B cell (primary cell): ENCODE measurements at regions of chr19 and their contacts with region 1.

Region 1: GRCh38 chr19:3557461-3558248 is at the start of gene MFSD12:
- DNase-seq: peak; percentile 95
- ATAC-seq: peak; percentile 88
- H3K4me3 ChIP-seq: peak within 1 kb of the TSS; percentile 36 to 87 (median 72)
- H3K4me3 Mint-ChIP-seq: peak within 1 kb of the TSS; percentile 99
- H3K27ac ChIP-seq: peak within 1 kb of the TSS; percentile 48 to 87
- H3K27ac Mint-ChIP-seq: peak within 1 kb of the TSS; percentile 94
- H3K4me1 ChIP-seq: peaks cover 42 to 60% of the 10 kb centered on the region in 2 donors
- H3K4me1 Mint-ChIP-seq: peaks cover 43% of the 10 kb centered on the region
- H3K27me3 ChIP-seq: no peaks in the 10 kb centered on the region
- H3K27me3 Mint-ChIP-seq: no peaks in the 10 kb centered on the region
- CTCF ChIP-seq: no peak
- total RNA-seq, gene MFSD12: 99.6 and 100 TPM in 2 replicates

Region 2: GRCh38 chr19:3516675-3517207 is 40.9 kb before region 1 on chr19:
- CTCF ChIA-PET with region 1: no interaction called
- POLR2A ChIA-PET with region 1: no interaction called
- intact Hi-C with region 1: loop called (anchors 5 kb)
- DNase-seq: peak; percentile 78
- ATAC-seq: peak; percentile 85
- H3K4me3 ChIP-seq: no peak overlapping the region
- H3K4me3 Mint-ChIP-seq: peak overlapping the region; percentile 2
- H3K27ac ChIP-seq: peak overlapping the region; percentile 58 to 72
- H3K27ac Mint-ChIP-seq: peak overlapping the region; percentile 83
- H3K4me1 ChIP-seq: peaks cover 10 to 31% of the 10 kb centered on the region in 2 donors
- H3K4me1 Mint-ChIP-seq: peaks cover 50% of the 10 kb centered on the region
- H3K27me3 ChIP-seq: no peaks in the 10 kb centered on the region
- H3K27me3 Mint-ChIP-seq: no peaks in the 10 kb centered on the region
- CTCF ChIP-seq: no peak

Region 3: DNA sequence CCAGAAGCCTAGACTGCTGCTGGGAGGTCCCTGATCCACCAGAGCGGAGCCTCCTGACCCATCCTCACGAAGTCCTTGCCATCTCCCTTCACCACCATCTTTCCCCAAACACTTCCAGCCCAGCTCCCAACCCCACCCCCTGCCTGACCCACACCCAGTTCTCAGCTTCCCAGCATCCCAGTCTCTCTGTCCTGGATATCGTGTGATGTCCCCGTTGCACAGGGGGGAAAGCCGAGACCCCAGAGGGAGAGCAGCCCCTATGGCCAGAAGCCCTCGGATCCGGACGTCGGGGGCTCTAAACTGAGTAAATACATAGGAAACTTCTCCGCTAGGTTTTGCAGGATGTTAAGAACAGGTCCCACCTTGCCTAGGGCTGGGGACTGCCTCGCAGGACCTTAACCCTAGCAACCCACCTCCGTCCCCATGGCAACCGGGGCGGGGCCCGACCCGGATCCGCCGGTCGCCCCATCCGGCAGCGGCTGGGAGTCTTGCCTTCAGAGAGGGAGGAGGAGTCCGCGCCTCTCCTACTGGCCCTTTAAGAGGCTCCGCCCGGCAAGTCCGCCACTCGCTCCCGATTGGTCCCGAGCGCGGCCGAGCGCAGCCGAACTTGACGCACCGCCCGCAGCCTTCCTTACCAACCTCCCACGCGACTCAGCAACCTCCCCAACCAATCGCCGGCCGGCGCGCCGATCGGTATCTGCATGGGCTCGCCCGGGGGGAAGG is 14.6 kb after region 1 on chr19:
- CTCF ChIA-PET with region 1: interaction called, 5 read pairs
- POLR2A ChIA-PET with region 1: interaction called, 4 read pairs
- intact Hi-C with region 1: loop called (anchors 1 kb)
- DNase-seq: peak; percentile 99
- ATAC-seq: peak; percentile 94
- H3K4me3 ChIP-seq: peak overlapping the region; percentile 11 to 74 (median 54)
- H3K4me3 Mint-ChIP-seq: peak overlapping the region; percentile 86
- H3K27ac ChIP-seq: peak overlapping the region; percentile 24 to 65
- H3K27ac Mint-ChIP-seq: peak overlapping the region; percentile 83
- H3K4me1 ChIP-seq: peaks cover 12 to 18% of the 10 kb centered on the region in 2 donors
- H3K4me1 Mint-ChIP-seq: peaks cover 16% of the 10 kb centered on the region
- H3K27me3 ChIP-seq: no peaks in the 10 kb centered on the region
- H3K27me3 Mint-ChIP-seq: no peaks in the 10 kb centered on the region
- CTCF ChIP-seq: no peak

Region 4: DNA sequence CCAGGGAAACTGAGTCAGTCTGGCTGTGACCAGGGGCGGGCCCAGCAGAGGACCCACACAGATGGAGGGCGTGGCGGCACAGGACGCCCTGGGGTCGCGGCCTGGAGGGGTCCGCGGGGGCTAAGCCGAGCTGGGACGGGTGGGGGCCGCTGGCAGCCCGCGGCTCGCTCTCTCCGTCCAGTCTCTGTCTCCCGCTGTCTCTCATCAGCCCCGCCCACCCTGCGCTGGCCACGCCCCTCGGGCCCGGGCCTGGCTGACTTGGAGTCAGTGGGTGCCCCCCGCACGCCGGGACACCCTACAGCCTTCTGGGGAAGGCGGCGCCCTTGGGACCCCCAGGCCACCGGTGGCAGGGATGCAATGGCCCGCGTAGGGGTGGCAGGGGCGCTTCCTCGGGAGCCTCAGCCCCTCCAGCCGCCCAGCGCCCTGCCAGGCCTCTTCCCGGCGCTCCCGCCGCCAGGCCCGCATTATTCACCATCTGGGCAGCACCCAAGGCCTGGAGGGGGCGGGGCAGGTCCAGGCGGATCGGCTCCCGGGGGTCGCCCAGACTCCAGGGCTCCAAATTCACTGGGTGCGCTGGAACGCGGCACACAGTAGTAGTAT is 49.1 kb after region 1 on chr19 and contains the start of gene TBXA2R:
- CTCF ChIA-PET with region 1: interaction called, 6 read pairs
- POLR2A ChIA-PET with region 1: no interaction called
- intact Hi-C with region 1: loop called (anchors 5 kb)
- DNase-seq: peak; percentile 68
- ATAC-seq: peak; percentile 63
- H3K4me3 ChIP-seq: peak within 1 kb of the TSS; percentile 49 to 71 (median 65)
- H3K4me3 Mint-ChIP-seq: peak within 1 kb of the TSS; percentile 69
- H3K27ac ChIP-seq: peak within 1 kb of the TSS in 1 of 2 donors; percentile 55
- H3K27ac Mint-ChIP-seq: peak within 1 kb of the TSS; percentile 22
- H3K4me1 ChIP-seq: peaks cover 36 to 49% of the 10 kb centered on the region in 2 donors
- H3K4me1 Mint-ChIP-seq: peaks cover 21% of the 10 kb centered on the region
- H3K27me3 ChIP-seq: peaks cover 0 to 4% (median 0%) of the 10 kb centered on the region in 4 experiments
- H3K27me3 Mint-ChIP-seq: no peaks in the 10 kb centered on the region
- CTCF ChIP-seq: no peak
- total RNA-seq, gene TBXA2R: 3.9 and 6.1 TPM in 2 replicates

Region 5: GRCh38 chr19:3700221-3701032 is 142.8 kb after region 1 on chr19 and contains the start of gene PIP5K1C:
- CTCF ChIA-PET with region 1: no interaction called
- POLR2A ChIA-PET with region 1: no interaction called
- intact Hi-C with region 1: loop called (anchors 1 kb)
- DNase-seq: peak; percentile 95
- ATAC-seq: peak; percentile 99
- H3K4me3 ChIP-seq: peak within 1 kb of the TSS; percentile 41 to 72 (median 70)
- H3K4me3 Mint-ChIP-seq: peak within 1 kb of the TSS; percentile 91
- H3K27ac ChIP-seq: peak within 1 kb of the TSS in 1 of 2 donors; percentile 42
- H3K27ac Mint-ChIP-seq: peak within 1 kb of the TSS; percentile 80
- H3K4me1 ChIP-seq: peaks cover 16 to 23% of the 10 kb centered on the region in 2 donors
- H3K4me1 Mint-ChIP-seq: peaks cover 28% of the 10 kb centered on the region
- H3K27me3 ChIP-seq: no peaks in the 10 kb centered on the region
- H3K27me3 Mint-ChIP-seq: peaks cover 2% of the 10 kb centered on the region
- CTCF ChIP-seq: peak; percentile 74
- total RNA-seq, gene PIP5K1C: 42.3 and 46.7 TPM in 2 replicates